Calu3 (cell line): ENCODE measurements at regions of chr6 and their contacts with region 1.

Region 1: GRCh38 chr6:128235556-128235955 is 284.8 kb downstream of the PTPRK start:
- DNase-seq: no peak
- H3K4me3 Mint-ChIP-seq: no peak overlapping the region
- H3K27ac Mint-ChIP-seq: no peak overlapping the region
- H3K4me1 Mint-ChIP-seq: peaks cover 30% of the 10 kb centered on the region
- H3K27me3 Mint-ChIP-seq: no peaks in the 10 kb centered on the region
- CTCF ChIP-seq: no peak

Region 2: GRCh38 chr6:127762284-127762683 is 473.3 kb before region 1 on chr6:
- CTCF ChIA-PET with region 1: no interaction called
- intact Hi-C with region 1: no loop called
- DNase-seq: no peak
- H3K4me3 Mint-ChIP-seq: no peak overlapping the region
- H3K27ac Mint-ChIP-seq: no peak overlapping the region
- H3K4me1 Mint-ChIP-seq: no peaks in the 10 kb centered on the region
- H3K27me3 Mint-ChIP-seq: no peaks in the 10 kb centered on the region
- CTCF ChIP-seq: no peak

Region 3: DNA sequence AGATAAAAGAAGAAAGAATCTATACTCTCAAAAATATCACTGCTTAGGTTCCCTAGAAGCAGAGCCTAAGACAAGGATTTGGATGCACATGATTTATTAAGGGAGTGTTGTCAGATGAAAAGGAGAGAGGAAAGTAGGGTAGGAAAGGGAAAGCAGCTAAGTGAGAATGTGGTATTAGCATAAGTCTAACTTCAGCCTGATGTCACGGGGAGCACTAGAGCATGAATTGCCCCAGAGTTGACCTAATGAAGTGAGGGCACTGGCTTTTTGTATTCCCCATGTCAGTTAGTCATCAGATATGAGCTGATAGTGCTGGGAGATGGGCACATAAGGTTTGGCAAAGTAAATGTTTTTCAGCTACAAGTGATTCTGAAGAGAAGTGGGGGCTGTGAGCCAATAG is 205.7 kb before region 1 on chr6:
- CTCF ChIA-PET with region 1: no interaction called
- intact Hi-C with region 1: no loop called
- DNase-seq: no peak
- H3K4me3 Mint-ChIP-seq: no peak overlapping the region
- H3K27ac Mint-ChIP-seq: no peak overlapping the region
- H3K4me1 Mint-ChIP-seq: peaks cover 10% of the 10 kb centered on the region
- H3K27me3 Mint-ChIP-seq: no peaks in the 10 kb centered on the region
- CTCF ChIP-seq: no peak

Region 4: DNA sequence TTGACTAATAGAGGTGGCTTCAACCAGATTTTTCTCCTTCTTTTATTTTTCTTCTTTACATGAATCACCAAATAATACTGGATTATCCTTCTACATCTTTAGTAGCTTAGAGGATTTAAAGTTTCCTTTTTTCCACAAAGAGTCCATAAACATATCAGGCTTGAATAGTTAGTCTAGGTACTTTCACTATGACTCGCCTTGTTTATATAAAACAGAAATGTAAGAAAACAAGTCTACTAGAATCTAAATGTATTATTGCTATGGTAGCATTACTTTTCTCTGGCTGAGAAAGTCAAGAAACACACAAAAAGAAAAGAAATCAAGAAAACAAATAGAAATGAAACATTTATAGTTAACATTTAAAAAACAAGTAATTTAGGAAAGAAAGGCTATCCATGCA is 69.7 kb after region 1 on chr6:
- CTCF ChIA-PET with region 1: no interaction called
- intact Hi-C with region 1: loop called (anchors 5 kb)
- DNase-seq: no peak
- H3K4me3 Mint-ChIP-seq: no peak overlapping the region
- H3K27ac Mint-ChIP-seq: peak overlapping the region; percentile 28
- H3K4me1 Mint-ChIP-seq: peaks cover 61% of the 10 kb centered on the region
- H3K27me3 Mint-ChIP-seq: no peaks in the 10 kb centered on the region
- CTCF ChIP-seq: no peak